Activated CD8-positive, alpha-beta T cell treated with anti-CD3 and anti-CD28 coated beads for 36 hours (primary cell): ENCODE measurements at regions of chr2 and their contacts with region 1.

Region 1: GRCh38 chr2:196453613-196454047 is 185.9 kb upstream of the CCDC150 start:
- DNase-seq: peak; percentile 68
- ATAC-seq: peak; percentile 73
- H3K4me3 Mint-ChIP-seq: no peak overlapping the region
- H3K27ac Mint-ChIP-seq: no peak overlapping the region
- H3K4me1 Mint-ChIP-seq: peaks cover 3% of the 10 kb centered on the region
- H3K27me3 Mint-ChIP-seq: peaks cover 17% of the 10 kb centered on the region
- CTCF ChIP-seq: peak; percentile 68

Region 2: GRCh38 chr2:196291873-196292800 is 161.5 kb before region 1 on chr2:
- CTCF ChIA-PET with region 1: interaction called, 30 read pairs
- POLR2A ChIA-PET with region 1: no interaction called
- intact Hi-C with region 1: loop called (anchors 5 kb)
- DNase-seq: no peak
- ATAC-seq: peak; percentile 18
- H3K4me3 Mint-ChIP-seq: no peak overlapping the region
- H3K27ac Mint-ChIP-seq: no peak overlapping the region
- H3K4me1 Mint-ChIP-seq: peaks cover 44% of the 10 kb centered on the region
- H3K27me3 Mint-ChIP-seq: no peaks in the 10 kb centered on the region
- CTCF ChIP-seq: no peak

Region 3: GRCh38 chr2:196344397-196344796 is 109.2 kb before region 1 on chr2:
- CTCF ChIA-PET with region 1: interaction called, 10 read pairs
- POLR2A ChIA-PET with region 1: no interaction called
- intact Hi-C with region 1: loop called (anchors 10 kb)
- DNase-seq: no peak
- ATAC-seq: no peak
- H3K4me3 Mint-ChIP-seq: no peak overlapping the region
- H3K27ac Mint-ChIP-seq: no peak overlapping the region
- H3K4me1 Mint-ChIP-seq: no peaks in the 10 kb centered on the region
- H3K27me3 Mint-ChIP-seq: no peaks in the 10 kb centered on the region
- CTCF ChIP-seq: no peak

Region 4: GRCh38 chr2:196413821-196414274 is 39.8 kb before region 1 on chr2:
- CTCF ChIA-PET with region 1: interaction called, 16 read pairs
- POLR2A ChIA-PET with region 1: no interaction called
- intact Hi-C with region 1: no loop called
- DNase-seq: peak; percentile 14
- ATAC-seq: peak; percentile 50
- H3K4me3 Mint-ChIP-seq: no peak overlapping the region
- H3K27ac Mint-ChIP-seq: no peak overlapping the region
- H3K4me1 Mint-ChIP-seq: peaks cover 9% of the 10 kb centered on the region
- H3K27me3 Mint-ChIP-seq: peaks cover 5% of the 10 kb centered on the region
- CTCF ChIP-seq: no peak

Region 5: DNA sequence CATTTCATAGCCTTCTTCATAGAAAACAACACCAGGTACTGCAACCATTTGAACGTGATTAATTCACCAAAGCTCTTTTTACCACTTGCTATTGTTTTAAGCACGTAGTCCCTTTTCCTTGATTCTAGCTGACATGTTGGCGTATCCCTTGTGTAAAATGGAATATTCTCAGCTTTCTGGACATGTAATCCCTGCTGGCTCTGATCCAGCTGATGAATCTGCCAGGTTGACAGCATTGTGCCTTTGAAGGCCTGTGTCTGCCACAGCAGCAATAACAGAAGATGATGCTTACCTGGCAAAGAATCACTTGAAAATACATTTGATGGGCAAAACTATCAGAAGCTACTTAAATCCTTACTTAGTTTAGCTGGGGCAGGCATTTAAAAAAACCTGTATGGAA is 104.9 kb after region 1 on chr2:
- CTCF ChIA-PET with region 1: no interaction called
- POLR2A ChIA-PET with region 1: no interaction called
- intact Hi-C with region 1: no loop called
- DNase-seq: no peak
- ATAC-seq: no peak
- H3K4me3 Mint-ChIP-seq: no peak overlapping the region
- H3K27ac Mint-ChIP-seq: no peak overlapping the region
- H3K4me1 Mint-ChIP-seq: no peaks in the 10 kb centered on the region
- H3K27me3 Mint-ChIP-seq: peaks cover 12% of the 10 kb centered on the region
- CTCF ChIP-seq: no peak

Region 6: DNA sequence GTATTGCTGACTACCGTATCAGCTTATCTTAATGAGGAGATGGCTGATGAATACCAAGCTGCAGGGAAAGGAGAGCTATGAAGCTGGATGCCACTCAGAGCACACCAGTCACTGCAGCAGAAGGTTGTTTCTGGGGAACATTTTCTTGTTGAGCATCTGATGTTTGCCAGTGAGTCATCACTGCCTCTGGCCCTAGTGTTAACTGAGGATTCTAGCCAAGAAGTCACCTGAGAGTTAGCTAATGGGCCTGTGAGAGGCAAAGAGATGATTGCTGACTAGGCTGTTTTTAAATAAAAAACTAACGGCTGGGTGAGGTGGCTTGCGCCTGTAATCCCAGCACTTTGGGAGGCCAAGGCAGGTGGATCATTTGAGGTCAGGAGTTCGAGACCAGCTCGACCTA is 223.8 kb after region 1 on chr2:
- CTCF ChIA-PET with region 1: no interaction called
- POLR2A ChIA-PET with region 1: no interaction called
- intact Hi-C with region 1: no loop called
- DNase-seq: no peak
- ATAC-seq: no peak
- H3K4me3 Mint-ChIP-seq: no peak overlapping the region
- H3K27ac Mint-ChIP-seq: no peak overlapping the region
- H3K4me1 Mint-ChIP-seq: no peaks in the 10 kb centered on the region
- H3K27me3 Mint-ChIP-seq: no peaks in the 10 kb centered on the region
- CTCF ChIP-seq: no peak